OCI-LY7 (cell line): ENCODE measurements at regions of chr4 and their contacts with region 1.

Region 1: GRCh38 chr4:187103351-187103750 is 379.7 kb upstream of the FAT1 start:
- DNase-seq: peak; percentile 97
- H3K4me3 ChIP-seq: peak overlapping the region; percentile 37
- H3K27ac ChIP-seq: peak overlapping the region; percentile 98
- H3K4me1 ChIP-seq: peaks cover 93% of the 10 kb centered on the region
- CTCF ChIP-seq: no peak

Region 2: DNA sequence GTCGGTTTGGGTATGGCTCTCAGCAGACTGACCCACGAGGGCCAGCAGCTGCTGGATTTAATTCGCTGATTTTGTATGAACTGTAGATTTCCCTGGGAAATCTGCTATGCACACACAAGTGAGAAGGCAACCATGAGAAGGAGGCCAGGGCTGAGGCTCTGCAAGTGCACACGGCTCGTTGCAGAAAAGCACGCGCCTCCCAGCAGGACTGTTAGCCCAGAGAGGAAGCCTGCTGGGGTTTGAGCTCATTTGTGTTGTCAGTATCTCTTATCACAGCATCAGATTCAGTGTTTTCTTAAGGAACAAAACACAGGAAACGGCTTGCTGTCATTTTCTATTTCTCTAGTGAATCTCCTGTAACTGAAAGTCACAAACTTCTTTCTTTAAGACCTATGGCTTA is 83.5 kb before region 1 on chr4:
- CTCF ChIA-PET with region 1: no interaction called
- POLR2A ChIA-PET with region 1: no interaction called
- intact Hi-C with region 1: no loop called
- DNase-seq: no peak
- H3K4me3 ChIP-seq: no peak overlapping the region
- H3K27ac ChIP-seq: no peak overlapping the region
- H3K4me1 ChIP-seq: no peaks in the 10 kb centered on the region
- CTCF ChIP-seq: no peak

Region 3: GRCh38 chr4:187118602-187119120 is 15.3 kb after region 1 on chr4:
- CTCF ChIA-PET with region 1: no interaction called
- POLR2A ChIA-PET with region 1: interaction called, 21 read pairs
- intact Hi-C with region 1: no loop called
- DNase-seq: no peak
- H3K4me3 ChIP-seq: no peak overlapping the region
- H3K27ac ChIP-seq: no peak overlapping the region
- H3K4me1 ChIP-seq: no peaks in the 10 kb centered on the region
- CTCF ChIP-seq: no peak

Region 4: DNA sequence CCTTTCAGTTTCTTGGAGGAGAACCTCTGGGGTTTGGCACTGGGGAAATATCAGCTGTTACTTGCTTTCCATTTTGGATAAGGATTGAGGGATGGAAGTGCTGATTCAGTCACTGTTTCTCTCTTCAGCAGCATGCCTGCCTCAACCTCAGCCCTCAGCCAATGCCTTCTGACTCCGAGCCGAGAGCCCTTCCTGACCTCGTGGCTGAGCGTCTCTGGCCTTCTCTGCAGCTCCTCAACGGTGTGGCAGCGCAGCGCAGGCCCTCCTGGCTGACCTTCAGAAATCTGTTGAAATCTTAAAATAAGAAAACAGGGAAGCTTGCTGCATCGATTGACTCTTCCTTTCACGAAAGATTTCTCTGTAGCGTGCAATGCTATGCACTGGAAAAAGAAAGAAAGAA is 54.7 kb after region 1 on chr4:
- CTCF ChIA-PET with region 1: no interaction called
- POLR2A ChIA-PET with region 1: no interaction called
- intact Hi-C with region 1: no loop called
- DNase-seq: no peak
- H3K4me3 ChIP-seq: no peak overlapping the region
- H3K27ac ChIP-seq: no peak overlapping the region
- H3K4me1 ChIP-seq: peaks cover 6% of the 10 kb centered on the region
- CTCF ChIP-seq: no peak